HepG2 (cell line): ENCODE measurements at regions of chr4 and their contacts with region 1.

Region 1: DNA sequence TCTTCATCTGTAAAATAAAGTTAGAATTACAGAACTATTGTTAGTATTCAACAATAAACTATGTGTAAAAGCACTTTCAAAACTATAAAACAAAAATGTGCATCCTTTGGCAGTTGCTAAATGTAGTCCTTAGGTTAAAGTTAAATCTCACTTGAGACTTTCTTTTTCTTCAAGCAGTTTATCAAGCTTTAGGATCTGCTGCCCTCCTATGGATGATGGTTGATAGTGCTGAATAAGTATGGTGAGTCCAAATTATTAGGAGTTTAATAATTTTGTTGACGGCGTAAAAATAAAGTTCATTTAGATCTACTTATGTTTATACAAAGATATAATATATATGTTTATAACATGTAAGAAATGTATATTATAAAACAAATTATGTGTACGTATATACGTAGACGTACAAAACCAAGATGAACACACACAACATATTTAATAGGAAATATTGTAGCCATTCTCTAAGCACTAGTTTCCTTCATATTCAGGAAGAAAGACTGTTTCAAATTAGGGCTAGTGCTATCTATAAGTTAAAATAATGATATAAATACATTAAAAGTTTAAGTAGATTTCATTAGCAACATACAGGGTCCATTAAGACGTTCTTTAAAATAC is 22.3 kb downstream of the UGT2A2 start:
- DNase-seq: peak; percentile 40
- ATAC-seq: no peak
- H3K4me3 ChIP-seq: no peak overlapping the region
- H3K27ac ChIP-seq: no peak overlapping the region
- H3K4me1 ChIP-seq: no peaks in the 10 kb centered on the region
- H3K27me3 ChIP-seq: no peaks in the 10 kb centered on the region
- CTCF ChIP-seq: peak; percentile 71
- EP300 ChIP-seq: no peak
- POLR2A ChIP-seq: no peak
- RAD21 ChIP-seq: peak; percentile 78

Region 2: DNA sequence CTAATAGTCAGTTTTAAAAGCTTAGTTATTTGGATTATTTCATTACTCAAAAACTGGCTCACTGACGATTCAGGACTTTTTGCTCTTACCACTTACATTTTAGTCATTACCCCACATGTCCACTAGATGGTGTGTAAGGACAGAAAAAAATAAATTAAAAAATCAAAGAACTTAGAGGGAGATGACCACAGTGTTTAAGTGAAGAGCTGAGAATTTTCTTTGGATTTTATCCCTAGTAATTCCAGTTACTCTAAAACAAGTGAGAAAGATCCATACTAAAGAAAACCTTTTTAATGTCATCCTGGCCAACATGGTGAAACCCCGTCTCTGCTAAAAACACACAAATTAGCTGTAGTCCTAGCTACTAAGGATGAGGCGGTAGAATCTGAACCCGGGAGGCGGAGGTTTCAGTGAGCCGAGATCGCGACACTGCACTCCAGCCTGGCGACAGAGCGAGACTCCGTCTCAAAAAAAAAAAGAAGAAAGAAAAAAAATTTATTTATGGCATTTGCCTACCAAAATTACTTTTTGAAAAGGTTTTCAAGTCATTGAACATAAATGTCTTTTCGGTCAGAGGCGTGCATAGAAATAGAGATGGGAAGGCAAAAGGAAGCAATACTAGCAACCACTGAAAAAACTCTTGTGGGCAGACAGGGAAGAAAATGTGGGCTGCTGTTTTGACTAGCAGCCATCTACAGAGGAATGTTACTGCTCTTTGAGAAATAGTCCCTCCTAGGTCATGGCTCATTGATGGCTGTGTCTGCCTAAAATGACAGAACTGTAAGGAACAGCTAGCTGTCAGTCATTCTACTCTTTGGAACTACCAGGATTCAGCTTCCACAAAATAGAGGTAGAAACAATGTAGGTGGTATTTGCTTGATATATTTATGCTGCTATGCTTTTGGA is 1345.1 kb before region 1 on chr4:
- CTCF ChIA-PET with region 1: no interaction called
- POLR2A ChIA-PET with region 1: no interaction called
- in situ Hi-C with region 1: no loop called
- intact Hi-C with region 1: loop called (anchors 5 kb)
- DNase-seq: peak; percentile 56
- ATAC-seq: 0 out of 3 replicates have a peak, but pooled peaks have one; percentile 41
- H3K4me3 ChIP-seq: no peak overlapping the region
- H3K27ac ChIP-seq: no peak overlapping the region
- H3K4me1 ChIP-seq: peaks cover 8% of the 10 kb centered on the region; the same call in 1 of the 2 replicates
- H3K27me3 ChIP-seq: no peaks in the 10 kb centered on the region; a peak in 1 of 5 replicates
- CTCF ChIP-seq: peak; percentile 62
- EP300 ChIP-seq: no peak
- POLR2A ChIP-seq: no peak
- RAD21 ChIP-seq: peak; percentile 18; the same call in 1 of the 2 replicates

Region 3: DNA sequence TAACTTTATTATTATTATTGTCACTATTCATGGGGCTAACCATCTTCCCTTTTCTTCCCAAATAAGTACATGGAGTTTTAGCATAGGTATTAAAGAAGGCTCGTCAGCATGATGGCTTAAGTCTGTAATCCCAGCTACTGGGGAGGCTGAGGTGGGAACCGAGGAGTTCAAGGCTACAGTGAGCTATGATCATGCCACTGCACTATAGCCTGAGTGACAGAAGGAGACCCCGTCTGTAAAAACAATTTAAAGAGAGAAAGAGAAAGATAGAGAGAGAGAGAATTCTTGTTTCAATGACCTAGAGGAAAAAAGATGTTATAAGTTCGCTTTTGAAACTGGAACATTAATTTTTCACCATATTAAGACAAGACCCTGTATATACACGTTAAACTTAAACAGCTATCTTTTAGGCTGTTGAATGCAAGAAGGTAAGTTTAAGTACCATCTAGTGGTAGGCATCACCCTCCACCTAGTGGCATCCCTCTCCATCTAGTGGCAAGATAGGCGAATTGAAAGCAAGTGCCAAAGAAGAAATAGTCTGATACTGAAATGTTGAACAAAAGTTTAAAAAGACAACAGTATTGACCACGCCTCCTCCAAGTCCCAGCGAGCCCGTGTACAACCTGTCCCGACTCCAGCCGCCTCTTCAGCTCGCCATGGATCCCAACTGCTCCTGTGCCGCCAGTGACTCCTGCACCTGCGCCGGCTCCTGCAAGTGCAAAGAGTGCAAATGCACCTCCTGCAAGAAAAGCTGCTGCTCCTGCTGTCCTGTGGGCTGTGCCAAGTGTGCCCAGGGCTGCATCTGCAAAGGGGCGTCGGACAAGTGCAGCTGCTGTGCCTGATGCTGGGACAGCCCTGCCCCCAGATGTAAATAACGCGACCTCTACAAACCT is 1241.3 kb before region 1 on chr4:
- CTCF ChIA-PET with region 1: no interaction called
- POLR2A ChIA-PET with region 1: no interaction called
- in situ Hi-C with region 1: no loop called
- intact Hi-C with region 1: loop called (anchors 5 kb)
- DNase-seq: peak; percentile 66
- ATAC-seq: peak; percentile 98
- H3K4me3 ChIP-seq: peak overlapping the region; percentile 15 to 63 (median 15); a peak in 3 of 6 replicates
- H3K27ac ChIP-seq: no peak overlapping the region
- H3K4me1 ChIP-seq: no peaks in the 10 kb centered on the region
- H3K27me3 ChIP-seq: no peaks in the 10 kb centered on the region
- CTCF ChIP-seq: peak; percentile 85
- EP300 ChIP-seq: no peak
- POLR2A ChIP-seq: no peak
- RAD21 ChIP-seq: peak; percentile 72

Region 4: DNA sequence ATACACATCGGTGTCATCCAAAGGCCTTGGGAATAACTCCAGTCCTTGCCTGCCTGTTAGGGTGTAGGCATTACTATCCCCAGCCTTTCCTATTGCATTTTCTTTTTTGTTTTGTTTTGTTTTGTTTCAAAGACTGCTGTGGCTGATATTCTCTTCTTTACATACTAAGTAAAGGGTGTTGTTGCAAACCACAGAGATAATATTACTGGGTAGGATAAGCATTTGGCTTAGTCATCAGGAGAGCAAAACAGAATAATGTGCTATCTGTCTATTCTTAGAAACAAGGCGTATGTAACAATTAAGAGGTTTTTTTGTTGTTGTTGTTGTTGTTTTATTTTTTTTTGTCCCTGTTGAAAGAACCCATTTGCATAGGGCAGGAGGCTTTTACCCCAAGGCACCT is 295.1 kb before region 1 on chr4:
- CTCF ChIA-PET with region 1: interaction called, 8 read pairs
- POLR2A ChIA-PET with region 1: no interaction called
- in situ Hi-C with region 1: loop called (anchors 10 kb)
- intact Hi-C with region 1: loop called (anchors 2 kb)
- DNase-seq: no peak
- ATAC-seq: no peak
- H3K4me3 ChIP-seq: no peak overlapping the region
- H3K27ac ChIP-seq: no peak overlapping the region
- H3K4me1 ChIP-seq: no peaks in the 10 kb centered on the region
- H3K27me3 ChIP-seq: no peaks in the 10 kb centered on the region
- CTCF ChIP-seq: no peak
- EP300 ChIP-seq: no peak
- POLR2A ChIP-seq: no peak
- RAD21 ChIP-seq: no peak

Region 5: GRCh38 chr4:69470561-69470960 is 146.6 kb before region 1 on chr4:
- CTCF ChIA-PET with region 1: no interaction called
- POLR2A ChIA-PET with region 1: no interaction called
- in situ Hi-C with region 1: no loop called
- intact Hi-C with region 1: loop called (anchors 5 kb)
- DNase-seq: no peak
- ATAC-seq: peak; percentile 76
- H3K4me3 ChIP-seq: no peak overlapping the region
- H3K27ac ChIP-seq: no peak overlapping the region
- H3K4me1 ChIP-seq: peaks cover 12% of the 10 kb centered on the region; the same call in 1 of the 2 replicates
- H3K27me3 ChIP-seq: no peaks in the 10 kb centered on the region
- CTCF ChIP-seq: peak; percentile 48
- EP300 ChIP-seq: no peak
- POLR2A ChIP-seq: no peak
- RAD21 ChIP-seq: no peak

Region 6: GRCh38 chr4:69536558-69536957 is 80.6 kb before region 1 on chr4:
- CTCF ChIA-PET with region 1: no interaction called
- POLR2A ChIA-PET with region 1: no interaction called
- in situ Hi-C with region 1: no loop called
- intact Hi-C with region 1: no loop called
- DNase-seq: no peak
- ATAC-seq: no peak
- H3K4me3 ChIP-seq: no peak overlapping the region
- H3K27ac ChIP-seq: no peak overlapping the region
- H3K4me1 ChIP-seq: no peaks in the 10 kb centered on the region
- H3K27me3 ChIP-seq: no peaks in the 10 kb centered on the region
- CTCF ChIP-seq: no peak
- EP300 ChIP-seq: no peak
- POLR2A ChIP-seq: no peak
- RAD21 ChIP-seq: no peak

Region 7: GRCh38 chr4:69594382-69594781 is 22.8 kb before region 1 on chr4:
- CTCF ChIA-PET with region 1: no interaction called
- POLR2A ChIA-PET with region 1: no interaction called
- in situ Hi-C with region 1: no loop called
- intact Hi-C with region 1: no loop called
- DNase-seq: peak; percentile 22
- ATAC-seq: peak; percentile 38; the same call in 1 of the 3 replicates
- H3K4me3 ChIP-seq: no peak overlapping the region
- H3K27ac ChIP-seq: no peak overlapping the region
- H3K4me1 ChIP-seq: peaks cover 16% of the 10 kb centered on the region
- H3K27me3 ChIP-seq: no peaks in the 10 kb centered on the region
- CTCF ChIP-seq: no peak
- EP300 ChIP-seq: no peak
- POLR2A ChIP-seq: no peak
- RAD21 ChIP-seq: no peak